ENCODE measurements at regions of chrX and their contacts with region 1.

Region 1: DNA sequence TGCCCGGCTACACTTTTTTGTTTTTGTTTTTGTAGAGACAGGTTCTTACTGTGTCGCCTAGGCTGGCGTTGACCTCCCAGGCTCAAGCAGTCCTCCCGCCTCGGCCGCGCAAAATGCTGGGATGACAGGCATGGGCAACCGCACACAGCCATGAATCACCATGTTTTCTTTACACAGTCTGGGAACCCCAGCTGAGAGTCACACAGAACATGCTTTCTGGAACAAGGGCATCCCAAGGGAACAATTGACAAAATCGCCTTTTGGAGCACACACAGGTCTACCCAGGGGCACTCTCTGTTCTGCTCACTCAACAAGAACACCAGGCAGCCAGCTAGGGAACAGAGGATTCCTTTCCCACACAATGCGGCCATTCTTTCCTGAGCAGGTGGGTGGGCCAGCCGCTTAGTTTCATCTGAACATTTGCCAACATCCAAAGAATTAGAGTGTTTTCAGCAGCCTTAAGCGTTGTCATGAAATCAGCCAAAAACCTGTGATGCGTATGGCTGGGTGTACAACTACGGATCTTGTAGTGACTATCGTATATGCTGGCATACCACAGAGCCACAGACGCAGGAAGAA is 15.7 kb downstream of the PRKX start:
- DNase-seq: peak; percentile 94
- H3K4me3 ChIP-seq: no peak overlapping the region
- H3K27ac ChIP-seq: peak overlapping the region; percentile 86
- H3K4me1 ChIP-seq: peaks cover 6% of the 10 kb centered on the region
- H3K27me3 ChIP-seq: no peaks in the 10 kb centered on the region
- CTCF ChIP-seq: no peak

Region 2: DNA sequence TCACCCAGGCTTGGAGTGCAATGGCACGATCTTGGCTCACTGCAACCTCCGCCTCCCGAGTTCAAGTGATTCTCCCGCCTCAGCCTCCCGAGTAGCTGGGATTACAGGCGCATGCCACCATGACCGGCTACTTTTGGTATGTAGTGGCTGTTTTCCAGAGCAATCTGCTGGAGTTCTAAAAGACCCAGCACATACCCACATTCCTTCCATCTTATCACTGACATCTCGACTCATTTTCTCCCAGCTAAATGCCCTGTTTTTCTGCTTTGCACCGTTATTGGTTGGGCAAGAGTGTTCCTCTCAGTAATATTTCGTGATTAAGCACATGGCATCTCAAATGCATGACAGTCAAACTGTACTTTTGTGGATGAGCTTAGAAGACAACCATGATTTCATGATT is 38.0 kb before region 1 on chrX:
- CTCF ChIA-PET with region 1: no interaction called
- dilution Hi-C with region 1: no loop called
- in situ Hi-C with region 1: no loop called
- intact Hi-C with region 1: no loop called
- DNase-seq: no peak
- H3K4me3 ChIP-seq: no peak overlapping the region
- H3K27ac ChIP-seq: no peak overlapping the region
- H3K4me1 ChIP-seq: no peaks in the 10 kb centered on the region
- H3K27me3 ChIP-seq: no peaks in the 10 kb centered on the region
- CTCF ChIP-seq: no peak

Region 3: DNA sequence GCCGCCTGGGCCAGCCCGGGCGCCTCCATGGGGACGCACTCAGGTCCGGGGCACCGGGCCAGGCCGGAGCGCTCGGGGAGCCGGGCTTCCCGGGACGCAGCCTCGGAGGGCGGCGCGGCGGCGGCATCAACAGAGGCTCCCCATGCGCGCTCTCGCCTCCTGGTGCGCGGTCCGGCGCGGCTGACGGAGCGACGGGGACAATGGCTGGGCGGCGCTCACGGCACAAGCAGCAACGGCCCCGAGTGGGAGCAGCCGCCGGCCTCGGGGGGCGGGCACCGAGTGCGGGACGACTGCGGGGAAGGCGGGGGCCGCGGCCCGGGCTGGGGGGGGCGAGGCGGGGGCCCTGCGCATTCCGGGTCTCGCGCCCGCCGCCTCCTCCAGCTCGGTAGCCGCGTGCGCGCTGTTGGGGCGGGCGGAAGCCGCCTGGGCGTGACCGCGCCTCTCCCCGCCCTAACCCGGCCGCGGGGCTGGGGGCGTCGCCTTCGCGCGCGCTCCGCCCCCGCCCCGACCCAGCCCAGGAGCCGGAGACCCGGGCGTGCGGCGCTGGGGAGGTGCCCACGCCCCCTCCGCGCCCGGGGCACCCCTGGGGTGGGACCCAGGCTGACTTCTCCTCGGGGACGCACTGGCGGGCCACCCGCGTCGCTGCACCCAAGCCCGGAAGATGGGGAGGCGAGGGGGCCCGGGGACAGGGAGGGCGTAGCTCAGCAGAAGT is 15.6 kb after region 1 on chrX and contains the start of gene PRKX:
- CTCF ChIA-PET with region 1: no interaction called
- dilution Hi-C with region 1: no loop called
- in situ Hi-C with region 1: no loop called
- intact Hi-C with region 1: loop called (anchors 2 kb)
- DNase-seq: peak; percentile 58
- H3K4me3 ChIP-seq: peak within 1 kb of the TSS; percentile 72 to 74 (median 74)
- H3K27ac ChIP-seq: peak within 1 kb of the TSS; percentile 51
- H3K4me1 ChIP-seq: no peaks in the 10 kb centered on the region
- H3K27me3 ChIP-seq: no peaks in the 10 kb centered on the region
- CTCF ChIP-seq: no peak
- total RNA-seq, gene PRKX: 33.8 to 39.7 TPM

Measured in mammary epithelial cell (primary cell).